Activated T-helper 2 cell treated with anti-CD3 and anti-CD28 coated beads, Interferon-gamma antibody, Interleukin-2, Interleukin-4, amounts not matched to agents 10 μg/mL and 5 μg/mL and 100 μg/mL, durations not matched to agents 14 hours and 24 hours and 36 hours (primary cell): ENCODE measurements at regions of chr17 and their contacts with region 1.

Region 1: GRCh38 chr17:39621523-39622379 is 5.0 kb upstream of the PPP1R1B start:
- DNase-seq: peak; percentile 85
- H3K4me3 Mint-ChIP-seq: peak overlapping the region; percentile 54
- H3K27ac Mint-ChIP-seq: peak overlapping the region; percentile 48
- H3K4me1 Mint-ChIP-seq: peaks cover 18% of the 10 kb centered on the region
- H3K27me3 Mint-ChIP-seq: peaks cover 42% of the 10 kb centered on the region

Region 2: GRCh38 chr17:39547713-39548478 is 73.9 kb before region 1 on chr17:
- intact Hi-C with region 1: loop called (anchors 2 kb)
- DNase-seq: peak; percentile 62
- H3K4me3 Mint-ChIP-seq: no peak overlapping the region
- H3K27ac Mint-ChIP-seq: no peak overlapping the region
- H3K4me1 Mint-ChIP-seq: no peaks in the 10 kb centered on the region
- H3K27me3 Mint-ChIP-seq: no peaks in the 10 kb centered on the region

Region 3: DNA sequence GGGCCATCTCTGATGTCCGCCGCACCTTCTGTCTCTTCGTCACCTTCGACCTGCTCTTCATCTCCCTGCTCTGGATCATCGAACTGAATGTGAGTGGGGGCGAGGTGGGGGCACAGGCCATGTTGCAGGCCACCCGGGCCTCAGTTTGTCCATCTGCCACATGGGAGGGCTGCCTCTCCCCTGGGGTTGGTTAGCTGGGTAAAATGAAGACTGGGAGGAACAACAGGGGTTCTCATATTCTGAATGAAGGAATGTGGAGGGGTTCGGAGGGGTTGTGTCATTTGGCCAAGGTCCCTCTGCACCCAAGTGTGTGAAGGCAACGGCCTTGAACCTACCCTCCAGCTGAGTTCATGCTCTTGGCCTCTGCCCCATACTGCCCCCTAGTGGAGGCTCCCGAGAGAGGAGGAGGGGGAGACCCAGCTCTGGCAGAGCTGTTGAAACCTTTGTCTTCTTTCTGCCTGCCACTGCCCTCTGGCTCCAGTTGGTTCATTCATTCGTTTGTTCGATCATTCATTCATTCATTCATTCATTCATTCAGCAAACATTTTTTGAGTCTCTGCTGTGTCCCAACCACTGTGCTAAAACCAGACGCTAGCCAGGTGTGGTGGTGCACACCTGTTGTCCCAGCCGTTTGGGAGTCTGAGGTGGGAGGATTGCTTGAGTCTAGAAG is 32.0 kb after region 1 on chr17:
- intact Hi-C with region 1: no loop called
- DNase-seq: peak; percentile 62
- H3K4me3 Mint-ChIP-seq: no peak overlapping the region
- H3K27ac Mint-ChIP-seq: no peak overlapping the region
- H3K4me1 Mint-ChIP-seq: peaks cover 8% of the 10 kb centered on the region
- H3K27me3 Mint-ChIP-seq: no peaks in the 10 kb centered on the region

Region 4: GRCh38 chr17:39668199-39668966 is 46.6 kb after region 1 on chr17 and contains the start of gene PNMT:
- intact Hi-C with region 1: loop called (anchors 2 kb)
- DNase-seq: peak; percentile 50
- H3K4me3 Mint-ChIP-seq: peak within 1 kb of the TSS; percentile 59
- H3K27ac Mint-ChIP-seq: no peak within 1 kb of the TSS
- H3K4me1 Mint-ChIP-seq: peaks cover 6% of the 10 kb centered on the region
- H3K27me3 Mint-ChIP-seq: peaks cover 22% of the 10 kb centered on the region
- total RNA-seq, gene PNMT: not detected in 2 replicates

Region 5: GRCh38 chr17:39863918-39864746 is 242.4 kb after region 1 on chr17 and contains the start of gene IKZF3:
- intact Hi-C with region 1: loop called (anchors 5 kb)
- DNase-seq: peak; percentile 70
- H3K4me3 Mint-ChIP-seq: peak within 1 kb of the TSS; percentile 89
- H3K27ac Mint-ChIP-seq: peak within 1 kb of the TSS; percentile 82
- H3K4me1 Mint-ChIP-seq: peaks cover 60% of the 10 kb centered on the region
- H3K27me3 Mint-ChIP-seq: no peaks in the 10 kb centered on the region
- total RNA-seq, gene IKZF3: 18.3 and 20.3 TPM in 2 replicates

Region 6: DNA sequence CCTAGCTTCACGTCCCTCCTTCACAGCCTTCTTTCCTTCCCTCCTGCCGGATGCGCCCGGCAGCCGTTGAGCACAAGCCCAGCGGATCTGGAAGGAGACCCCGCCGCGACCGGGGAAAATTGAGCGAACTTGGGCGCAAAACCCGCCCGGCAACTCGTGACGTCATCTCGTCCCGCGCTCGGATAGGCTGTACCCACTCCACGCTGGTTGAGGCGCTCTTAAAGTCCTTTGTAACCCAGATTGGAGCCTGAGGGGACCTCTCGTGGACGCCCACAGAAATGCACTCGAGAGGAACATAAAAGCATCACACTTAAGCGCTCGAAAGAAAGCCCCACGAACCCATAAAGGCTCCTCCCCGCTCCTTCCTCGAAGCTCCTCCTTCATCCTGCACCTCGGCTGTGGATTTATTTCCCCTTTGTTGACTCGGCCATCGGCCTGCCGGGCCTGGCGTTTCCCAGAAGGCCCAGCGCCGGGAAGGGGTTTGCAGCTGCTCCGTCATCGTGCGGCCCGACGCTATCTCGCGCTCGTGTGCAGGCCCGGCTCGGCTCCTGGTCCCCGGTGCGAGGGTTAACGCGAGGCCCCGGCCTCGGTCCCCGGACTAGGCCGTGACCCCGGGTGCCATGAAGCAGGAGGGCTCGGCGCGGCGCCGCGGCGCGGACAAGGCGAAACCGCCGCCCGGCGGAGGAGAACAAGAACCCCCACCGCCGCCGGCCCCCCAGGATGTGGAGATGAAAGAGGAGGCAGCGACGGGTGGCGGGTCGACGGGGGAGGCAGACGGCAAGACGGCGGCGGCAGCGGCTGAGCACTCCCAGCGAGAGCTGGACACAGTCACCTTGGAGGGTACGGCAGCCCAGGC is 358.8 kb after region 1 on chr17 and contains the start of gene PSMD3:
- intact Hi-C with region 1: loop called (anchors 1 kb)
- DNase-seq: peak; percentile 99
- H3K4me3 Mint-ChIP-seq: peak within 1 kb of the TSS; percentile 93
- H3K27ac Mint-ChIP-seq: peak within 1 kb of the TSS; percentile 74
- H3K4me1 Mint-ChIP-seq: peaks cover 27% of the 10 kb centered on the region
- H3K27me3 Mint-ChIP-seq: peaks cover 7% of the 10 kb centered on the region
- total RNA-seq, gene PSMD3: 193 and 196 TPM in 2 replicates